HepG2 (cell line): ENCODE measurements at regions of chr7 and their contacts with region 1.

Region 1: GRCh38 chr7:155598810-155599210 is 45.7 kb upstream of the RBM33 start:
- DNase-seq: peak; percentile 57
- ATAC-seq: peak; percentile 43
- H3K4me3 ChIP-seq: peak overlapping the region in 2 of 3 experiments; percentile 8 to 38; a peak in 3 of 6 replicates
- H3K27ac ChIP-seq: no peak overlapping the region
- H3K4me1 ChIP-seq: peaks cover 56% of the 10 kb centered on the region
- H3K27me3 ChIP-seq: no peaks in the 10 kb centered on the region
- CTCF ChIP-seq: peak; percentile 91
- EP300 ChIP-seq: no peak
- POLR2A ChIP-seq: no peak
- RAD21 ChIP-seq: peak; percentile 90

Region 2: GRCh38 chr7:155618708-155619633 is 20.2 kb after region 1 on chr7:
- CTCF ChIA-PET with region 1: no interaction called
- POLR2A ChIA-PET with region 1: interaction called, 47 read pairs
- in situ Hi-C with region 1: no loop called
- intact Hi-C with region 1: loop called (anchors 1 kb)
- DNase-seq: peak; percentile 98
- ATAC-seq: peak; percentile 98
- H3K4me3 ChIP-seq: peak overlapping the region in 2 of 3 experiments; percentile 46 to 68; a peak in 3 of 6 replicates
- H3K27ac ChIP-seq: peak overlapping the region; percentile 100
- H3K4me1 ChIP-seq: peaks cover 66% of the 10 kb centered on the region
- H3K27me3 ChIP-seq: no peaks in the 10 kb centered on the region
- CTCF ChIP-seq: peak; percentile 38; the same call in 1 of the 2 replicates
- EP300 ChIP-seq: peak in 1 of 2 experiments; percentile 88; a peak in 3 of 4 replicates
- POLR2A ChIP-seq: peak; percentile 63 to 82
- RAD21 ChIP-seq: 0 out of 2 replicates have a peak, but pooled peaks have one; percentile 9

Region 3: DNA sequence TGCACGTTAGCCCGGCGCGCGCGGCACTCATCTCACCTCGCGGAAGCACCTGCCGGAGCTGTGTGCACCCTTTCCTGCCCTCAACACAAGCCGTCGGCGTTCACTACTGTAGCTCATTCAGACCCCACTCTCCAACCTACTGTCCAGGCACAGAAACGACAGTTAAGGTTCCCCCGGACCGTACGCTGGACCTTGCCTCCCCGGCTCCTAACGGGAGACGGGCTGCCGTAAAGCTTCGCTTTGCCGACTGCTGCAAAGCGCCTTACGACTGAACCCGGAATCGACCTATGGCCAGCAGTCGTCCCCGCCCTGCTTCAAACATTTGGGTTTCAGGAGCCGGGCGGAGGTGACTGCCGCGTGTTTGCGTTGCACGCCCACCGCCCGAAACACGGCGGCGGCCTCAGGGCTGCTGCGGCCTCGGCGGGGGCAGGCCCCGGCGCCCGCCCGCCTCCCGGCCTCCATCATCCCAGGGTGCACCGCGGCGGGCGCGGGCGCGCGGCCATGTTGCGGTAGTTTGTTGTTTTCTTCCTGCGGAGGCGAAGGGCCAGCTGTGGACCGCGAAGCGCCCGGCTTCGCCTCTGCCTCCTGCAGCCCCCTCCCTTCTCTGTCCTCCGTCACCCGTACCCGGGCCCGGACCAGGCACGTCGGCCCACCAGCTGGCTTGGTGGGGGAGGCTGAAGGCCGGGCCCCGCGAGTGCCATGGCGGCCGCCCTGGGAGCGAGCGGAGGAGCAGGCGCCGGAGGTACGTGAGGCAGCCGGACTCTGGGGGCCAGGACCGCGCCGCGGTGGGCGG is 45.6 kb after region 1 on chr7 and contains the start of gene RBM33:
- CTCF ChIA-PET with region 1: interaction called, 3 read pairs
- POLR2A ChIA-PET with region 1: interaction called, 16 read pairs
- in situ Hi-C with region 1: no loop called
- intact Hi-C with region 1: loop called (anchors 1 kb)
- DNase-seq: peak; percentile 88
- ATAC-seq: peak; percentile 94
- H3K4me3 ChIP-seq: peak within 1 kb of the TSS; percentile 80 to 95 (median 94)
- H3K27ac ChIP-seq: peak within 1 kb of the TSS; percentile 97
- H3K4me1 ChIP-seq: peaks cover 53% of the 10 kb centered on the region
- H3K27me3 ChIP-seq: no peaks in the 10 kb centered on the region; a peak in 1 of 5 replicates
- CTCF ChIP-seq: peak; percentile 17; the same call in 1 of the 2 replicates
- EP300 ChIP-seq: no peak
- POLR2A ChIP-seq: peak; percentile 79 to 92
- RAD21 ChIP-seq: peak; percentile 39
- total RNA-seq, gene RBM33: 22.3 and 28.9 TPM in 2 replicates

Region 4: GRCh38 chr7:155681663-155682062 is 82.9 kb after region 1 on chr7:
- CTCF ChIA-PET with region 1: no interaction called
- POLR2A ChIA-PET with region 1: no interaction called
- in situ Hi-C with region 1: no loop called
- intact Hi-C with region 1: loop called (anchors 5 kb)
- DNase-seq: no peak
- ATAC-seq: no peak
- H3K4me3 ChIP-seq: no peak overlapping the region
- H3K27ac ChIP-seq: peak overlapping the region; percentile 64
- H3K4me1 ChIP-seq: peaks cover 62% of the 10 kb centered on the region
- H3K27me3 ChIP-seq: no peaks in the 10 kb centered on the region
- CTCF ChIP-seq: no peak
- EP300 ChIP-seq: no peak
- POLR2A ChIP-seq: no peak
- RAD21 ChIP-seq: no peak

Region 5: GRCh38 chr7:155738652-155739537 is 140.1 kb after region 1 on chr7:
- CTCF ChIA-PET with region 1: interaction called, 21 read pairs
- POLR2A ChIA-PET with region 1: no interaction called
- in situ Hi-C with region 1: no loop called
- intact Hi-C with region 1: loop called (anchors 1 kb)
- DNase-seq: peak; percentile 74
- ATAC-seq: peak; percentile 90
- H3K4me3 ChIP-seq: no peak overlapping the region
- H3K27ac ChIP-seq: no peak overlapping the region
- H3K4me1 ChIP-seq: no peaks in the 10 kb centered on the region
- H3K27me3 ChIP-seq: no peaks in the 10 kb centered on the region
- CTCF ChIP-seq: peak; percentile 84
- EP300 ChIP-seq: no peak
- POLR2A ChIP-seq: no peak
- RAD21 ChIP-seq: peak; percentile 80